Panc1 (cell line): ENCODE measurements at regions of chr2 and their contacts with region 1.

Region 1: GRCh38 chr2:172102391-172103278 is at the start of gene DLX2:
- DNase-seq: no peak
- ATAC-seq: peak; percentile 74
- H3K4me3 ChIP-seq: peak within 1 kb of the TSS; percentile 64 to 92
- H3K27ac ChIP-seq: peak within 1 kb of the TSS; percentile 65
- H3K4me1 ChIP-seq: peaks cover 30% of the 10 kb centered on the region
- H3K27me3 ChIP-seq: no peaks in the 10 kb centered on the region
- CTCF ChIP-seq: no peak
- total RNA-seq, gene DLX2: 4.4 TPM

Region 2: DNA sequence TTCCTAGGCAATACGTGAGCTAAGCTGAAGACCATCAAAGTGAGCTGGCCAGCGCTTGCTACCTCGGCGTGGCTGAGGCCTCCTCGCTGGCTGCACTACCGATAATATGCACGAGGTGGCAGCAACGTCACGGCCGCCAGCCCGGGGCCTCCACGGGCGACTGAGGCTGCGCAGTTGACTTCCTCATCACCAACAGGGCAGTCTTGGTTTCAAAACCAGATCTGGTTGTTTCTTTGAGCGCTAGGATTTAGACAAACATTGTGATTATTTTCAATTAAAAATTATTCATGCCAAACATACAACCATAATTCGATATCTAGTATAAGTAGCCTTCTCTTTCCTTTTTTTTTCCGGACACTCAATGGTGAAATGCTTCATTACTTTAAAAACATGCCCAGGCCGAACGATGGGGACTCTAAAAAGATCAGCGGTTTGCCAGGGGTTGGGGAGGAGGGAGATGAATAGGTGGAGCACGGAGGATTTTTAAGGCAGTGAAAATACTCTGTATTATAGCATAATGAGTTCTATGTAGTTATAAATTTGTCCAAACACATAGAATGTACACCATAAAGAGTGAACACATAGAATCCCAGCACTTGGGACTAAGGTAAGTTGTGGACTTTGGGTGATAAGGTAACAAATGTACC is 528.4 kb before region 1 on chr2:
- CTCF ChIA-PET with region 1: no interaction called
- POLR2A ChIA-PET with region 1: no interaction called
- in situ Hi-C with region 1: no loop called
- intact Hi-C with region 1: loop called (anchors 5 kb)
- DNase-seq: peak; percentile 38
- ATAC-seq: peak; percentile 99
- H3K4me3 ChIP-seq: no peak overlapping the region
- H3K27ac ChIP-seq: no peak overlapping the region
- H3K4me1 ChIP-seq: no peaks in the 10 kb centered on the region
- H3K27me3 ChIP-seq: 0 out of 2 replicates have a peak, but pooled peaks cover 4% of the 10 kb centered on the region
- CTCF ChIP-seq: peak; percentile 99

Region 3: GRCh38 chr2:171706152-171706803 is 396.4 kb before region 1 on chr2:
- CTCF ChIA-PET with region 1: no interaction called
- POLR2A ChIA-PET with region 1: no interaction called
- in situ Hi-C with region 1: no loop called
- intact Hi-C with region 1: loop called (anchors 2 kb)
- DNase-seq: no peak
- ATAC-seq: peak; percentile 63; the same call in 1 of the 2 replicates
- H3K4me3 ChIP-seq: no peak overlapping the region
- H3K27ac ChIP-seq: no peak overlapping the region
- H3K4me1 ChIP-seq: peaks cover 11% of the 10 kb centered on the region; the same call in 1 of the 2 replicates
- H3K27me3 ChIP-seq: no peaks in the 10 kb centered on the region
- CTCF ChIP-seq: peak; percentile 33; the same call in 1 of the 2 replicates

Region 4: DNA sequence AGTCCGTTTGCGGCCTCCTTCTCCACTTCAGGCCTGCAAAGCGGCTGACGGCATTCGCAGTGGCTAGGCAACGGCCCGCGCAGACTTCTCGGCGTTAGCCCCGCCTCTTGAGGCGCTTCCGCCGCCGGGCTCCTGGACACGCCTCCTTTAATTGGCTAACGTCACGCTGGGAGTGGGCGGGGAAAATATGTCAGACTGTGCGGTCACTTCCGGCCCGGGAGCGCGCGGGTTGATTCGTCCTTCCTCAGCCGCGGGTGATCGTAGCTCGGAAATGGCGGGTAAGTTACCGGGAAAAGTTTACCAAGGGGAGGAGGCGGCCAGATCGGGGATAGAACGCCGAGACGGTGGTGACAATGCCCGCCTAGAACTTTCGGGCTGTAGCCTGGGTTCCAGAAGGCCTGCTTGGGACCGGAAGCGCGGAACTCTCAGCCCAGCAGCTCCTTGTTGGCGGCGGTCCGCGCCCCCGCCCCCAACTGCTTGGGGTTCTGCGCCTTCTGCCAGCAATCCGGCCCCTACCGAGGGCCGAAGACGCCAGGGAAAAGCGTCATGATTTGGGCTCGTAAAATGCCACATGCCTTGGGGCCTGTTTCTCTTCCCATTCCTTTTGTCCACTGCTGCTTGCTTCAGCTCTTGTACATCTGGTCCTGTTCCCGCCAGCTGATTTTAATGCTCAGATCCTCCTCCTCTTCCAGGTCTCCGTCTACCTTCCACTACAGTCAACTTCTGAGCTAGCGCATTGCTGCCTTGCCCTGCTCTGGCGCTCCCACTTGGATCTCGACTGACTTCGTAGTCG is 180.2 kb before region 1 on chr2 and contains the start of gene HAT1:
- CTCF ChIA-PET with region 1: interaction called, 5 read pairs
- POLR2A ChIA-PET with region 1: interaction called, 3 read pairs
- in situ Hi-C with region 1: no loop called
- intact Hi-C with region 1: loop called (anchors 5 kb)
- DNase-seq: peak; percentile 93
- ATAC-seq: peak; percentile 99
- H3K4me3 ChIP-seq: peak within 1 kb of the TSS; percentile 72 to 94
- H3K27ac ChIP-seq: peak within 1 kb of the TSS; percentile 81
- H3K4me1 ChIP-seq: peaks cover 15% of the 10 kb centered on the region; the same call in 1 of the 2 replicates
- H3K27me3 ChIP-seq: no peaks in the 10 kb centered on the region
- CTCF ChIP-seq: no peak
- total RNA-seq, gene HAT1: 74.7 TPM

Region 5: DNA sequence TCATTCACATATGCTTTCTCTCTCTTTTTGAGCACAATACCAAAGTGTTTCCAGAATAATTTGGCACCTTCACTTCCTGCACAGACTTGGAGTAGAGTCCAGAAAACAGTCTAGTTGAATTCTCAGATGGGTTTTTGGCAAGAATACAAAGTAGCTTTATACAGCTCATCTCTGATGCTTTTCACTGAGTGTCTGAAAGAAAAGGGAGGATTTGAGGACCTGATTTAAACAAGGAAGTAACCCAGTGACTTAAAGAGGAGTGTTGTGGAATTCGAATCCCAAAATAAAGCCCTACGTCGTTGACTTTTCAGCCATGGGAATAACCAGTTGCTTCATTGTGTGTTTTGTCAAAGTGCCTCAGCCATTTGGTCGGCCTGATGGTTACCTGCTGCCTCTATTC is 71.1 kb before region 1 on chr2:
- CTCF ChIA-PET with region 1: no interaction called
- POLR2A ChIA-PET with region 1: no interaction called
- in situ Hi-C with region 1: no loop called
- intact Hi-C with region 1: no loop called
- DNase-seq: no peak
- ATAC-seq: no peak
- H3K4me3 ChIP-seq: no peak overlapping the region
- H3K27ac ChIP-seq: no peak overlapping the region
- H3K4me1 ChIP-seq: no peaks in the 10 kb centered on the region
- H3K27me3 ChIP-seq: no peaks in the 10 kb centered on the region
- CTCF ChIP-seq: no peak

Region 6: DNA sequence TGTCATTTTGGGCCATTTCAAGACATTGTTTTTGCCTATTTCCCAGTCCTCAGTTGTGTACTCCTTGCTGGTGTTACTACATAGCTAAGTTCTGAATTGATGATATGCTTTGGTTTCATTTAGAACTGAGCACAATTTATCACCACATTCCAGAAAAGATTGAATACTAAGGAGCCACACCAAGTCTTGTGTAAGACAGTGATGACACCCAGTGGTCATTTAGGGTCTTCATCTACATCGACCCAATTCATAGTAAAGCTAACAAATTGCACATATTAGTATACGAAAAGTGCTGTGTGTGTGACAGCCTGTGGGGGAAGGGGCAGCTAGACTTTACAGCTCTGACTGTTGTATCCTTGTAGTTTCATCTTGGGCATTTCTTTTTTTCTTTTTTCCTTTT is 11.0 kb after region 1 on chr2:
- CTCF ChIA-PET with region 1: interaction called, 14 read pairs
- POLR2A ChIA-PET with region 1: no interaction called
- in situ Hi-C with region 1: no loop called
- intact Hi-C with region 1: no loop called
- DNase-seq: no peak
- ATAC-seq: peak; percentile 84
- H3K4me3 ChIP-seq: no peak overlapping the region
- H3K27ac ChIP-seq: no peak overlapping the region
- H3K4me1 ChIP-seq: no peaks in the 10 kb centered on the region
- H3K27me3 ChIP-seq: no peaks in the 10 kb centered on the region
- CTCF ChIP-seq: peak; percentile 51